Activated CD4-positive, alpha-beta T cell treated with anti-CD3 and anti-CD28 coated beads for 36 hours (primary cell): ENCODE measurements at regions of chr19 and their contacts with region 1.

Region 1: GRCh38 chr19:41449079-41449864 is 6.3 kb downstream of the ERICH4 start:
- DNase-seq: peak; percentile 85
- ATAC-seq: peak; percentile 93
- H3K4me3 Mint-ChIP-seq: peak overlapping the region; percentile 70
- H3K27ac Mint-ChIP-seq: no peak overlapping the region
- H3K4me1 Mint-ChIP-seq: peaks cover 11% of the 10 kb centered on the region
- H3K27me3 Mint-ChIP-seq: peaks cover 12% of the 10 kb centered on the region

Region 2: DNA sequence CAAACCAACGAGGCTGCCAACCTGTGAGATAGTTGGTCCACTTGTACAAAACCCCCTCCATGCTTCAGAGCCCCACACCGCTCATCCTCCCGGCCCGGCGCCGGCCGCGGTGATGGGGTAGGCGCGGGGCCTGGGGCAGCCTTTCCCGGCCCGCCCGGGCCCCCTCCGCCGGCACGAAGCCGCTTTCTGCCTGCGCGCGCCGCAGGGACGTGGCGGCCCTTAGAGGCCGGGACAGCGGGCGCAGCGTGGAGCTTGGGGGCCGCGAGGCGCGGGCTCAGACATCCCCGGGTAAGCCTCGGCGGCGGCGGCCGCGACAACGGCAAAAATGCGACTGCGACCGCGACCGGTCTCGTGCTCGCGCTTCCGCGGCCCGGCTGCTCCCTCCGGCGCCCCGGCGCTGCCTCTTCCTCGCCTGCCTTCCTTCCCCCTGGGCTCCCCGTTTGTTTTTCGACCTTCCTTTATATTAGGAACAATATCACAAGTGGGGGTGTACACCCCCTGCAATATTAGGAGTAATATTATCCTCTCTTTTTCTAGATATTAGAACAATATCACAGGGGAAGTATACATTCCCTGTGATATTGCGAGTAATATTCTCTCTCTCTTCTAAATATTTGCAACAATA is 72.8 kb after region 1 on chr19:
- CTCF ChIA-PET with region 1: no interaction called
- POLR2A ChIA-PET with region 1: no interaction called
- intact Hi-C with region 1: loop called in 1 of 2 experiments (anchors 5 kb)
- DNase-seq: peak; percentile 64
- ATAC-seq: peak; percentile 51
- H3K4me3 Mint-ChIP-seq: peak overlapping the region; percentile 66
- H3K27ac Mint-ChIP-seq: peak overlapping the region; percentile 89
- H3K4me1 Mint-ChIP-seq: peaks cover 20% of the 10 kb centered on the region
- H3K27me3 Mint-ChIP-seq: peaks cover 14% of the 10 kb centered on the region

Region 3: GRCh38 chr19:41531438-41532311 is 82.4 kb after region 1 on chr19:
- CTCF ChIA-PET with region 1: interaction called, 20 read pairs
- POLR2A ChIA-PET with region 1: interaction called, 3 read pairs
- intact Hi-C with region 1: no loop called
- DNase-seq: peak; percentile 91
- ATAC-seq: peak; percentile 85
- H3K4me3 Mint-ChIP-seq: peak overlapping the region; percentile 76
- H3K27ac Mint-ChIP-seq: peak overlapping the region; percentile 65
- H3K4me1 Mint-ChIP-seq: peaks cover 60% of the 10 kb centered on the region
- H3K27me3 Mint-ChIP-seq: no peaks in the 10 kb centered on the region

Region 4: DNA sequence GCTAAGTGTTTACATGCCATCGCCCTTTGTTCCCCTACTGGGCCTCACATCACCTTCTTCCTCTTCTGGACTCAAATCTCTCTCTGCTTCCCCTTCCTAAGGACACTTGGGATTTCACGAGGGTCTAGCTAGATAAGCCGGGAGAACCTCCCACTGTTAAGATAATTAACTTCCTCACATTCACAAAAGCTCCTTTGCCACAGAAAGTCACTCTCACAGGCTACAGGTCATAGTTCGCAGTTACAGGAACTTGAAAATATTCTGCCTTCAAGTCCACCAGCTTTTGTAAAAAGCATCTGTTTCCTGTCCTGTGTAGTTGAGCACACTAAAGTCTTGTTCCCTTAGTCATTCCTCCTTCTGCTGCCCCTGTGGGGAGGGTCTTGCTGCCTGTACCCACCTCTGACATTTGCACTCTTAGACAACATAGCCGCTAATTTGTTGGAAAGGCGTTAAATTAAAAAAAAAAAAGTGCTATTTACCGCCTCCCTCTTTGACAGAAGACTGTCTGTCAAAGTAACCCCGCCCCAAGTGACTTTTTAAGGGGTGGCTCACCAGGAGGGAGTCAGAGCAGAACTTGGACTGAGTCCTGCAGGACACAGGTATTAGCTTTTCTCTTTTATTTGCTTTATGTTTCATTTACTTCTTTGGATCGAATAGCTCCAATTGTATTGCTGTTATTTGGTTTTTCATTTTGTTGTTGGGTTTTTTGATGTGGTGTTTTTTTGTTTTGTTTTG is 99.8 kb after region 1 on chr19:
- CTCF ChIA-PET with region 1: interaction called, 12 read pairs
- POLR2A ChIA-PET with region 1: interaction called, 5 read pairs
- intact Hi-C with region 1: no loop called
- DNase-seq: peak; percentile 89
- ATAC-seq: peak; percentile 76
- H3K4me3 Mint-ChIP-seq: peak overlapping the region; percentile 90
- H3K27ac Mint-ChIP-seq: peak overlapping the region; percentile 99
- H3K4me1 Mint-ChIP-seq: peaks cover 69% of the 10 kb centered on the region
- H3K27me3 Mint-ChIP-seq: no peaks in the 10 kb centered on the region

Region 5: GRCh38 chr19:41554907-41555306 is 105.6 kb after region 1 on chr19:
- CTCF ChIA-PET with region 1: interaction called, 50 read pairs
- POLR2A ChIA-PET with region 1: no interaction called
- intact Hi-C with region 1: no loop called
- DNase-seq: peak; percentile 43
- ATAC-seq: peak; percentile 37
- H3K4me3 Mint-ChIP-seq: peak overlapping the region; percentile 42
- H3K27ac Mint-ChIP-seq: peak overlapping the region; percentile 94
- H3K4me1 Mint-ChIP-seq: peaks cover 74% of the 10 kb centered on the region
- H3K27me3 Mint-ChIP-seq: no peaks in the 10 kb centered on the region

Region 6: DNA sequence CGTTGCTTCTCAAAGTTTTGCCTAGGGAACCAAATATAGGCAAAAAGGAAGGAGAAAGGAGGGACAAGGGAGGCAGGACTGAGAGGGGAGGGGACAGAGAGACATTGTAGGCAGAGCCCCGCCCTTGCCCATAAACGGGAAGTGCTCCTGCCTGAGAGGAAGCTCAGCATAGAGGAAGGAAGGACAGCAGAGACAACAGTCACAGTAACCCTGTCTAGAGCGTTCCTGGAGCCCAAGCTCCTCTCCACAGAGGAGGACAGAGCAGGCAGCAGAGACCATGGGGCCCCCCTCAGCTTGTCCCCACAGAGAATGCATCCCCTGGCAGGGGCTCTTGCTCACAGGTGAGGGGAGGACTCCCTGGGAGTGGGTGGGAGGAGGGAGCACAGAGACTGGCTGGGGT is 126.7 kb after region 1 on chr19 and contains the start of gene CEACAM21:
- CTCF ChIA-PET with region 1: interaction called, 120 read pairs
- POLR2A ChIA-PET with region 1: no interaction called
- intact Hi-C with region 1: no loop called
- DNase-seq: peak; percentile 75
- ATAC-seq: peak; percentile 100
- H3K4me3 Mint-ChIP-seq: peak within 1 kb of the TSS; percentile 70
- H3K27ac Mint-ChIP-seq: peak within 1 kb of the TSS; percentile 83
- H3K4me1 Mint-ChIP-seq: peaks cover 24% of the 10 kb centered on the region
- H3K27me3 Mint-ChIP-seq: no peaks in the 10 kb centered on the region
- total RNA-seq, gene CEACAM21: 22.1 to 27.6 TPM

Region 7: GRCh38 chr19:41597600-41598041 is 148.3 kb after region 1 on chr19:
- CTCF ChIA-PET with region 1: interaction called, 100 read pairs
- POLR2A ChIA-PET with region 1: no interaction called
- intact Hi-C with region 1: loop called (anchors 1 kb)
- DNase-seq: peak; percentile 83
- ATAC-seq: peak; percentile 83
- H3K4me3 Mint-ChIP-seq: peak overlapping the region; percentile 4
- H3K27ac Mint-ChIP-seq: no peak overlapping the region
- H3K4me1 Mint-ChIP-seq: peaks cover 12% of the 10 kb centered on the region
- H3K27me3 Mint-ChIP-seq: peaks cover 5% of the 10 kb centered on the region